CD4-positive, alpha-beta memory T cell (primary cell): ENCODE measurements at regions of chr13 and their contacts with region 1.

Region 1: DNA sequence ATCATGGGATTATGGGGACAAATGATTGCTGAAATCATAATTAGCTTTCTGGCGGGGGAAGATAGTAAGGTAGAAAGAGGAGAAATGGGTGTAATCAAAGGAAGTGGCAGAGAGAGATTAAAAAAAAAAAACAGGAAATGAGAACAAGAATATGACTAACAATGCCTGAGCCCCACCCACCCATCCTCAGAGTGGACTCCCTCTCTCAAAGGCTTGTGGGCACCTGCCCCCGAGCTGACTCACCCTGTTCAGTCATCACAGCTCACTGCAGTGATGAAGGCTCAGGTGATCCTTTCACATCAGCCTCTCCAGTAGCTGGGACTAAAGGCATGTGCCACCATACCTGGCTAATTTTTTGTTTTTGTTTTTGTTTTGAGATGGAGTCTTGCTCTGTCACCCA is 26.4 kb upstream of the TPT1 start:
- DNase-seq: peak; percentile 85 to 99 (median 92)
- H3K4me3 ChIP-seq: no peak overlapping the region
- H3K4me3 Mint-ChIP-seq: peak overlapping the region; percentile 35 to 79 (median 64)
- H3K27ac ChIP-seq: peak overlapping the region; percentile 50
- H3K27ac Mint-ChIP-seq: peak overlapping the region; percentile 93 to 97 (median 93)
- H3K4me1 ChIP-seq: peaks cover 42% of the 10 kb centered on the region
- H3K4me1 Mint-ChIP-seq: peaks cover 35 to 62% (median 49%) of the 10 kb centered on the region in 4 donors
- H3K27me3 ChIP-seq: no peaks in the 10 kb centered on the region
- H3K27me3 Mint-ChIP-seq: no peaks in the 10 kb centered on the region

Region 2: GRCh38 chr13:45209229-45209628 is 158.1 kb before region 1 on chr13:
- CTCF ChIA-PET with region 1: no interaction called
- POLR2A ChIA-PET with region 1: no interaction called
- intact Hi-C with region 1: no loop called
- DNase-seq: no peak
- H3K4me3 ChIP-seq: no peak overlapping the region
- H3K4me3 Mint-ChIP-seq: no peak overlapping the region
- H3K27ac ChIP-seq: no peak overlapping the region
- H3K27ac Mint-ChIP-seq: no peak overlapping the region
- H3K4me1 ChIP-seq: no peaks in the 10 kb centered on the region
- H3K4me1 Mint-ChIP-seq: peaks cover 0 to 7% (median 4%) of the 10 kb centered on the region in 4 donors
- H3K27me3 ChIP-seq: no peaks in the 10 kb centered on the region
- H3K27me3 Mint-ChIP-seq: no peaks in the 10 kb centered on the region

Region 3: GRCh38 chr13:45340926-45341750 is 26.2 kb before region 1 on chr13 and contains the start of gene TPT1:
- CTCF ChIA-PET with region 1: interaction called, 75 read pairs
- POLR2A ChIA-PET with region 1: interaction called, 219 read pairs
- intact Hi-C with region 1: loop called (anchors 1 kb)
- DNase-seq: peak; percentile 99 to 100 (median 99)
- H3K4me3 ChIP-seq: peak within 1 kb of the TSS; percentile 90 to 94
- H3K4me3 Mint-ChIP-seq: peak within 1 kb of the TSS; percentile 92 to 100 (median 98)
- H3K27ac ChIP-seq: peak within 1 kb of the TSS; percentile 100
- H3K27ac Mint-ChIP-seq: peak within 1 kb of the TSS; percentile 80 to 100 (median 100)
- H3K4me1 ChIP-seq: peaks cover 55% of the 10 kb centered on the region
- H3K4me1 Mint-ChIP-seq: peaks cover 37 to 68% (median 50%) of the 10 kb centered on the region in 4 donors
- H3K27me3 ChIP-seq: no peaks in the 10 kb centered on the region
- H3K27me3 Mint-ChIP-seq: peaks cover 0 to 3% of the 10 kb centered on the region in 2 donors
- total RNA-seq, gene TPT1: 10,578 to 11,080 TPM

Region 4: DNA sequence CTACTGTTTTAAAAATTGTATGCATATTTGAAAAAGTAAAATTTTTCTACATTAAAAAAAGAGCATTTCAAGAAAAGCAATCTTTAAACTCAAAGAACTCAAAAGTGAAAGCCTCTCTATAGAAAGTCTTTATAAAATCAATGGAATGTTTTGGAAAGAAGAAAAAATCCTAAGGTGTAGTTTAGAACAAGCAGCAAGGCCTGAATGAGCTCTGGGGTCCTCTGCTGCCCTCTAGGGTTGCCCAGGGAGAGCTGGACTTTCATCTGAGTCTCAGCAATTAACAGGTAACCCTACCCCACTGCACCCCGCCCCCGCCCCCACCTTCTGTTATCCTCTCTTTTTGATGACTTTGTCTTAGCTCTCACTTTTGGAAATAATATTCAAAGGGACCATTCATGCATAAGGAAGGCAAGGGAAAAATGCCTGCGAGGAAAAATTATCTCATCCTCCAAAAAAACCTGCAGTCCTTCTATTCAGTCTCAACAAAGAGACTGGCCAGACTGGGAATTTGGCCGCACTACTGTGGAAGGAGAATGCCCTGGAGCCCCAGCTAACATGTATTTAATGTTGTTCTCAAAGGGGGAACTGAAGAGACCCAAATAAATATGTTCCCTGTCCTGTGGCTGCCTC is 26.7 kb after region 1 on chr13:
- CTCF ChIA-PET with region 1: interaction called, 128 read pairs
- POLR2A ChIA-PET with region 1: interaction called, 17 read pairs
- intact Hi-C with region 1: loop called (anchors 2 kb)
- DNase-seq: peak in 3 of 5 donors; percentile 22 to 31 (median 26)
- H3K4me3 ChIP-seq: no peak overlapping the region
- H3K4me3 Mint-ChIP-seq: no peak overlapping the region
- H3K27ac ChIP-seq: no peak overlapping the region
- H3K27ac Mint-ChIP-seq: peak overlapping the region; percentile 53 to 94 (median 77)
- H3K4me1 ChIP-seq: peaks cover 50% of the 10 kb centered on the region
- H3K4me1 Mint-ChIP-seq: peaks cover 35 to 49% (median 45%) of the 10 kb centered on the region in 4 donors
- H3K27me3 ChIP-seq: no peaks in the 10 kb centered on the region
- H3K27me3 Mint-ChIP-seq: no peaks in the 10 kb centered on the region

Region 5: GRCh38 chr13:45417790-45418534 is 50.6 kb after region 1 on chr13 and contains the start of gene SLC25A30:
- CTCF ChIA-PET with region 1: interaction called, 25 read pairs
- POLR2A ChIA-PET with region 1: interaction called, 27 read pairs
- intact Hi-C with region 1: loop called (anchors 2 kb)
- DNase-seq: peak; percentile 86 to 93 (median 88)
- H3K4me3 ChIP-seq: peak within 1 kb of the TSS; percentile 84 to 94
- H3K4me3 Mint-ChIP-seq: peak within 1 kb of the TSS; percentile 94 to 97 (median 96)
- H3K27ac ChIP-seq: peak within 1 kb of the TSS; percentile 79
- H3K27ac Mint-ChIP-seq: peak within 1 kb of the TSS; percentile 94 to 99 (median 96)
- H3K4me1 ChIP-seq: peaks cover 37% of the 10 kb centered on the region
- H3K4me1 Mint-ChIP-seq: peaks cover 15 to 38% (median 25%) of the 10 kb centered on the region in 4 donors
- H3K27me3 ChIP-seq: no peaks in the 10 kb centered on the region
- H3K27me3 Mint-ChIP-seq: peaks cover 0 to 2% of the 10 kb centered on the region in 2 donors
- total RNA-seq, gene SLC25A30: 21.4 to 22.0 TPM

Region 6: DNA sequence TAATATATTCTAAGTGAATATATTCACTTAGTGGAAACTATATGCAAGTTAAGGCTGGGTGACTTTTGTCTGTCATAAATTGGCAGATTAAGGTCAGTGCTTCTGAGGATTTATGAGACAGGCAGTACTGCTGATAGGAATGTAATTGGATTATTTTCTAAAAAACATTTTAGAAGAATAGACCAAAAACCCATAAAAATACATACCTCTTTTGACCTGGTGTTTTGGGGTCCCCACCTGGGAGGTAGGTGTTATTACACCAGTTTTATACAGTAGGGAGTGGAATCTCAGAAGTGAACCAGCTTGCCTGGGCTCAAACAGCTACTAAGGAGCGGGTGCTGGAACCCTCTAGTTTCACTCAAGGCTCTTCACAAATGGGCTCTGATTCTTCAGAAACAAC is 122.7 kb after region 1 on chr13:
- CTCF ChIA-PET with region 1: interaction called, 42 read pairs
- POLR2A ChIA-PET with region 1: no interaction called
- intact Hi-C with region 1: no loop called
- DNase-seq: peak in 4 of 5 donors; percentile 30 to 37 (median 32)
- H3K4me3 ChIP-seq: no peak overlapping the region
- H3K4me3 Mint-ChIP-seq: no peak overlapping the region
- H3K27ac ChIP-seq: no peak overlapping the region
- H3K27ac Mint-ChIP-seq: peak overlapping the region in 2 of 7 donors; percentile 47 to 61
- H3K4me1 ChIP-seq: no peaks in the 10 kb centered on the region
- H3K4me1 Mint-ChIP-seq: peaks cover 0 to 4% (median 2%) of the 10 kb centered on the region in 4 donors
- H3K27me3 ChIP-seq: no peaks in the 10 kb centered on the region
- H3K27me3 Mint-ChIP-seq: no peaks in the 10 kb centered on the region

Region 7: DNA sequence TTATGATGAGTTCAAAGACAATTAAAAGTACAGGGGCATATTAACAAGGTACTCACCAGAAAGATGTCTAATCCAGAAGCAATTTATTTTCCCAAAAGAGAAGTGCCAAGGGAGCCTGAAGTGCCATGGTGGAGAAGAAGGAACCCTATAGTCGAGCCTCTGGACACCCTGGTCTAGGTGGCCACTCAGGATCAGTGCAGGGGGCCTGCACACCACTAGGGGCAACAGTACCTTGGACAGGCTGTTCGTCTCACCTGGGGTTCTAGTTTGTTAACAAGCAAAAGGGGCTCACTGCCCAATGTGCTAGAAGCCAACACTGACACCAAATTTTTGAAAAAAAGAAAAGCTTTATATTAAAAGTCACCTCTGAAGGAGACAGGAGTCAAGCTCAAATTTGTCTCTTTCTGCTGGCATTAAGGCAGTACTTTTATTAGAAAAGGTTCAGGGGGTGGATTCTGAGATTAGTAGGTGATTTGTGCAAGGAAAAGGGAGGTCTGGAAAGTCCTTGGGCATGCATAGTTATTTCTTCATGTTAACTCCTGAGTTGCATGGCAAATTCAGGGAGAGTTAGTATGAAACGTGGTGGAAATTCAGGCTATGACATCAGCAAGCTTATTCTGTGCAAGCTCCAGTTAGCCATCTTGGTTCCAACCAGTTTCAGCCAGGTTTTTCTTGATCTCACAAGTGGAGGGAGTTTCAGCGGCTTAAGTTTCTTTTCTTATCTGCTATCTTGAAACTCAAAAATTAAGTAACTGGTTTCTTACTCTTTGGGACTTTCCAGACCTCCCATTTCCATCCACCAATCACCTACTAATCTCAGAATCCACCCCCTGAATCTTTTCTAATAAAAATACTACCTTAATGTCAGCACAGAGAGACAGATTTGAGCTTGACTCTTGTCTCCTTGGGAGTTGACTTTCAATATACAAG is 333.9 kb after region 1 on chr13:
- CTCF ChIA-PET with region 1: no interaction called
- POLR2A ChIA-PET with region 1: no interaction called
- intact Hi-C with region 1: no loop called
- DNase-seq: peak in 1 of 5 donors; percentile 8
- H3K4me3 ChIP-seq: no peak overlapping the region
- H3K4me3 Mint-ChIP-seq: no peak overlapping the region
- H3K27ac ChIP-seq: no peak overlapping the region
- H3K27ac Mint-ChIP-seq: no peak overlapping the region
- H3K4me1 ChIP-seq: no peaks in the 10 kb centered on the region
- H3K4me1 Mint-ChIP-seq: no peaks in the 10 kb centered on the region
- H3K27me3 ChIP-seq: no peaks in the 10 kb centered on the region
- H3K27me3 Mint-ChIP-seq: peaks cover 0 to 5% of the 10 kb centered on the region in 2 donors